Caco-2 (cell line): ENCODE measurements at regions of chr16 and their contacts with region 1.

Region 1: GRCh38 chr16:62870554-62870953 is 834.3 kb upstream of the CDH8 start:
- DNase-seq: no peak
- H3K4me3 ChIP-seq: no peak overlapping the region
- H3K4me3 Mint-ChIP-seq: no peak overlapping the region
- H3K27ac Mint-ChIP-seq: no peak overlapping the region
- H3K4me1 ChIP-seq: no peaks in the 10 kb centered on the region
- H3K4me1 Mint-ChIP-seq: no peaks in the 10 kb centered on the region
- H3K27me3 ChIP-seq: no peaks in the 10 kb centered on the region
- H3K27me3 Mint-ChIP-seq: no peaks in the 10 kb centered on the region
- CTCF ChIP-seq: no peak

Region 2: GRCh38 chr16:62190426-62190825 is 680.1 kb before region 1 on chr16:
- CTCF ChIA-PET with region 1: interaction called, 3 read pairs
- POLR2A ChIA-PET with region 1: no interaction called
- intact Hi-C with region 1: loop called (anchors 1 kb)
- DNase-seq: peak in 1 of 2 experiments; percentile 21
- H3K4me3 ChIP-seq: no peak overlapping the region
- H3K4me3 Mint-ChIP-seq: no peak overlapping the region
- H3K27ac Mint-ChIP-seq: no peak overlapping the region
- H3K4me1 ChIP-seq: no peaks in the 10 kb centered on the region
- H3K4me1 Mint-ChIP-seq: no peaks in the 10 kb centered on the region
- H3K27me3 ChIP-seq: no peaks in the 10 kb centered on the region
- H3K27me3 Mint-ChIP-seq: peaks cover 5% of the 10 kb centered on the region
- CTCF ChIP-seq: peak; percentile 63 to 74

Region 3: DNA sequence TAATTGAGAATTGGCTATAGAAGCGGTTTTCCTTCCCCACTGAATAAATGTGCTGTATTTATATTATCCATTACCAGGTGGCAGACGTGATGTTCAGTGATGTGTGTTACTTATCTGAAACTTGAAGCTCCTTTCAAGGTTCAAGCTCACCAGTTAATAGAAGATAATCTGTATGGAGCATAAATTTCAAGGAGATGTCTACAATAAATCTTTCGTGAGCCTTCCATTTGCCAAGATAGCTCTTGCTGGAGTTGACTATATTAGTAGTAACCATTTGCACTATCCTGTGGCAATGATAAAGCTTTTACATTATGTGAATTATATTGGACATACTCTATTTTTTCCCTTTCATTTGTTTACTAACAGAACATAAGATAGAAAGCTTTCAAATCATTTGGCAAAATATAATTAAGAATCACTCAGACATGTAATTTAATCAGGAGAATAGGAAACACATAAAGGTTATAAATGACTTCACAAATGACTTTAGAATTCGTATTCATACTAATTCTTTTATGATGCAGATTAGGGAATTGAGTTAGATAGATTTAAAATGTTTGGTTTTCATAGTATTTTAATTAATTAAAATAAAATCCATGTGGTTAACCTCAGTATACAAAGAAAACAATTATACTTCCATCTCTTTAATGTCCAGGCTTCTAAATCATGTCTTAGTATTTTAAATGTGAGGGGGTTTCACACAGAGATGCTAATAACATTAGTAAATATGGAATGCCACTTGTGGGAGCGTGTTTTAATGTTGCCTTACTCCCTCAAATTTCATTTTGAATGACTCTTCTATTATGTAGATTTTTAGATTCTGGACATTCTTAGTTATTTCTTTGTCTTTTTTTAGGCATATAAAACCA is 169.9 kb before region 1 on chr16:
- CTCF ChIA-PET with region 1: no interaction called
- POLR2A ChIA-PET with region 1: no interaction called
- intact Hi-C with region 1: no loop called
- DNase-seq: no peak
- H3K4me3 ChIP-seq: no peak overlapping the region
- H3K4me3 Mint-ChIP-seq: no peak overlapping the region
- H3K27ac Mint-ChIP-seq: no peak overlapping the region
- H3K4me1 ChIP-seq: no peaks in the 10 kb centered on the region
- H3K4me1 Mint-ChIP-seq: no peaks in the 10 kb centered on the region
- H3K27me3 ChIP-seq: no peaks in the 10 kb centered on the region
- H3K27me3 Mint-ChIP-seq: no peaks in the 10 kb centered on the region
- CTCF ChIP-seq: no peak

Region 4: GRCh38 chr16:62846399-62847057 is 24.0 kb before region 1 on chr16:
- CTCF ChIA-PET with region 1: no interaction called
- POLR2A ChIA-PET with region 1: no interaction called
- intact Hi-C with region 1: no loop called
- DNase-seq: no peak
- H3K4me3 ChIP-seq: no peak overlapping the region
- H3K4me3 Mint-ChIP-seq: no peak overlapping the region
- H3K27ac Mint-ChIP-seq: no peak overlapping the region
- H3K4me1 ChIP-seq: no peaks in the 10 kb centered on the region
- H3K4me1 Mint-ChIP-seq: no peaks in the 10 kb centered on the region
- H3K27me3 ChIP-seq: no peaks in the 10 kb centered on the region
- H3K27me3 Mint-ChIP-seq: peaks cover 4% of the 10 kb centered on the region
- CTCF ChIP-seq: no peak